CD8-positive, alpha-beta T cell (primary cell): ENCODE measurements at regions of chr17 and their contacts with region 1.

Region 1: DNA sequence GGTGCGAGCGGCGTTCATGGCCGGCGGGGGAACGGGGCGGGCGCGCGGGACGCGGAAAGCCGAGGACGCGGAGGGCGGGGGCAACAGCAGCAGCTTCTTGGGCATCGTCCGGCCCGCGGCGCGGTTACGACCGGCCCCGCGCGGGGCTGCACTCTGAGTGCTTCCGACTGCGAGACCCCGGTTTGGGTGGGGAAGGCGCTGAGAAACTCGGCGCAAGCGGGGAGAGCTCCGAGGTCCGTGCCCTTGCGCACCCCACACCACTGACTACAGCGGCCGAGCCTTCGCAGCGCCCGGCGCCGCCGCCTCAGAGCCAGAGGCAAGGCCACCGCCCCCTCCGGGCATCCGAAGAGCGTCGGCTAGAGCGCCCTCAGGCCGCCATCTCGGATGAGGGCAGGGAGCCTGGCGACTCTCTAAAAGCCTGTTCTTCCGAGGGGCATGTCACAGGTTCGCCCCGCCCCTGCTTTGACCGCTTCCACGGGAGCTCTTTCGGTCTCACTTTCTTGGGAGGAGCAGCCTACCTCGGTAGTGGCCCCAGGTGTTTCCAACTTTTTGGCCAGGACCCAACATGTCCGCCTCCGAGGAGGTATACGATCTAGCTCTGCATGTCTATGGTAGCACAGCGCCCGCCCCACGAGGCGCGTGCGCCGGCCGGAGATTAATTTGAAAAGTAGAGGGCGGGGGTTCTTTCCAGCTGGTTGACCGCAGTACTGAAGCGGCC is at the start of gene PRPSAP1:
- DNase-seq: peak; percentile 61 to 91 (median 83)
- ATAC-seq: peak; percentile 94
- H3K4me3 ChIP-seq: peak within 1 kb of the TSS; percentile 69 to 82
- H3K4me3 Mint-ChIP-seq: peak within 1 kb of the TSS; percentile 95
- H3K27ac ChIP-seq: peak within 1 kb of the TSS; percentile 53 to 95
- H3K27ac Mint-ChIP-seq: peak within 1 kb of the TSS; percentile 98
- H3K4me1 ChIP-seq: peaks cover 4% of the 10 kb centered on the region
- H3K4me1 Mint-ChIP-seq: peaks cover 24% of the 10 kb centered on the region
- H3K27me3 ChIP-seq: no peaks in the 10 kb centered on the region
- H3K27me3 Mint-ChIP-seq: no peaks in the 10 kb centered on the region
- CTCF ChIP-seq: peak; percentile 47
- total RNA-seq, gene PRPSAP1: 10.5 to 12.5 TPM

Region 2: DNA sequence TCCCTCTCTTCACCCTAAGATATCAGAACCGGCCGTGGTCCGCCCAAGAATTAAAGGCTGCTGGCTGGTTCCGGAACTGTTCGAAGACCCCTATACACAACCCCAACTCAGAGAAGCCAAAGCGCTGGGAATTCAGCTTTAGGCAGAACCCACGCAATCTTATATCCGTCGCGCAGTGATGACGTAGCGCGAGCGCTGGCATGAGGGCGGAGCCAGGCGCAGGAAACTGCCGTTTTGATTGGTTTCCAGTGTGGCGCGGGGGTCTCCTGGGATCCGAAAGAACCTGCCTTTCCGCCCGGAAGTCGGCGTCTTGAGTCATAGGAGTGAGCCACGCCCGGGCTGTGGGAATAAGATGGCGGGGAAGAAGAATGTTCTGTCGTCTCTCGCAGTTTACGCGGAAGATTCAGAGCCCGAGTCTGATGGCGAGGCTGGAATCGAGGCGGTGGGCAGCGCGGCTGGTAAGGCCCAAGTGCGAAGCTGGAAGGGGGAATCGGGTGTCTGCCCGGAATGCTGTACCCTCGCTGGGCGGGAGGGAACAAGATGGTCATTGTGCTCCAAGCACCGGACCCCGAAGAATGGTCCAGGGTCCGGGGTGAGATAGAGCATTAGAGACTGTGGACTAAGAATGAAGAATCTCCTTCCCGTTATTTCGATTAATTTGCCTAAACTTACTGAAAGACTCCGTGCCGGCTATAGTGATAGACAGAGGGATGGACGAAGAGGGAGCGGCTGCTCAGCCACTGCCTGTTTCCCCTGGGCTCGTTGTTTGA is 686.6 kb before region 1 on chr17 and contains the starts of genes RECQL5 and SAP30BP:
- CTCF ChIA-PET with region 1: no interaction called
- POLR2A ChIA-PET with region 1: no interaction called
- intact Hi-C with region 1: loop called in 1 of 2 experiments (anchors 2 kb)
- DNase-seq: peak; percentile 95 to 99 (median 98)
- ATAC-seq: peak; percentile 100
- H3K4me3 ChIP-seq: peak within 1 kb of the TSS; percentile 78 to 85
- H3K4me3 Mint-ChIP-seq: peak within 1 kb of the TSS; percentile 58
- H3K27ac ChIP-seq: peak within 1 kb of the TSS; percentile 88 to 96
- H3K27ac Mint-ChIP-seq: no peak within 1 kb of the TSS
- H3K4me1 ChIP-seq: peaks cover 18% of the 10 kb centered on the region
- H3K4me1 Mint-ChIP-seq: peaks cover 33% of the 10 kb centered on the region
- H3K27me3 ChIP-seq: no peaks in the 10 kb centered on the region
- H3K27me3 Mint-ChIP-seq: no peaks in the 10 kb centered on the region
- CTCF ChIP-seq: no peak
- total RNA-seq, gene RECQL5: 11.2 to 13.2 TPM
- total RNA-seq, gene SAP30BP: 303 to 305 TPM

Region 3: GRCh38 chr17:76072148-76072858 is 281.5 kb before region 1 on chr17 and contains the start of gene SRP68:
- CTCF ChIA-PET with region 1: no interaction called
- POLR2A ChIA-PET with region 1: no interaction called
- intact Hi-C with region 1: loop called in 1 of 2 experiments (anchors 1 kb)
- DNase-seq: peak; percentile 63 to 91 (median 83)
- ATAC-seq: peak; percentile 82
- H3K4me3 ChIP-seq: peak within 1 kb of the TSS; percentile 86 to 98
- H3K4me3 Mint-ChIP-seq: peak within 1 kb of the TSS; percentile 96
- H3K27ac ChIP-seq: peak within 1 kb of the TSS; percentile 77 to 81
- H3K27ac Mint-ChIP-seq: peak within 1 kb of the TSS; percentile 95
- H3K4me1 ChIP-seq: peaks cover 44% of the 10 kb centered on the region
- H3K4me1 Mint-ChIP-seq: peaks cover 53% of the 10 kb centered on the region
- H3K27me3 ChIP-seq: peaks cover 18 to 28% of the 10 kb centered on the region in 2 experiments
- H3K27me3 Mint-ChIP-seq: peaks cover 19% of the 10 kb centered on the region
- CTCF ChIP-seq: no peak
- total RNA-seq, gene SRP68: 93.6 to 99.9 TPM

Region 4: DNA sequence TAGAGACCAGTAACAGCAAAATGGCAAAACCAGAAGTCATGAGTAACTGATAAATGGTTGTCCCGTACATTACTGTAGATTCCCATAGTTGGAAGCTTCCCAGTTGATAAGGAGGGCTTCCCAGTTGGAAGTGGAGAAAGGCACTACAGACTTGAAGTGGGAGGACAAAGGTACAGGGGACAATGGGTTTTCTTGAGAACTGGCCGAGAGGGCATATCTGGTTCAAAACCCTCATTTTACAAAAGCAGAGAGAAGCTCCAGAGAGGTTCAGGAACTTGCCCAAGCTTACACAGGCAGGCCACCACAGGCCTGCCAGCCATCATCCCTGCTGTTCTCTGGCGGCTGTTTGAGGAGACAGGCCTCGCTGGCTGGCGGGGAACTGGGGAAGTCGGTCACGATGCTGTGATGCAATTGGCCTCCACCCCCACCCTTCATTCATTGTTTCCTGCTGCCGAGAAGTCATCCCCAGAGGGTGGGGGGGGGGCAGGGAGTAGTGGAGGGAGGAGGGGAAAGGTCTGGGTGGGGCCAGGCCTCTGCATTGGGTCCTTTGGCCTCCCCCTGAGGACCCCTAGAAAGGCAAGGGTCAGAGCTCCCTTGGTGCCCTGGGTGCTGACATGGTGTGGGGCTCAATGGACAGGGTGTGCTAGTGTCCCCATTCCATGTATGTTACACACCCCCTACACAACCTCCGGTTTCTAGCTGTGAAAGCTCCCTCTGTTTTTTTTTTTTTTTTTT is 85.6 kb before region 1 on chr17:
- CTCF ChIA-PET with region 1: no interaction called
- POLR2A ChIA-PET with region 1: no interaction called
- intact Hi-C with region 1: no loop called
- DNase-seq: peak in 8 of 9 experiments; percentile 43 to 89 (median 72)
- ATAC-seq: peak; percentile 11
- H3K4me3 ChIP-seq: peak overlapping the region; percentile 40 to 76
- H3K4me3 Mint-ChIP-seq: peak overlapping the region; percentile 90
- H3K27ac ChIP-seq: peak overlapping the region; percentile 74 to 79
- H3K27ac Mint-ChIP-seq: peak overlapping the region; percentile 96
- H3K4me1 ChIP-seq: peaks cover 78% of the 10 kb centered on the region
- H3K4me1 Mint-ChIP-seq: peaks cover 61% of the 10 kb centered on the region
- H3K27me3 ChIP-seq: no peaks in the 10 kb centered on the region
- H3K27me3 Mint-ChIP-seq: no peaks in the 10 kb centered on the region
- CTCF ChIP-seq: no peak

Region 5: DNA sequence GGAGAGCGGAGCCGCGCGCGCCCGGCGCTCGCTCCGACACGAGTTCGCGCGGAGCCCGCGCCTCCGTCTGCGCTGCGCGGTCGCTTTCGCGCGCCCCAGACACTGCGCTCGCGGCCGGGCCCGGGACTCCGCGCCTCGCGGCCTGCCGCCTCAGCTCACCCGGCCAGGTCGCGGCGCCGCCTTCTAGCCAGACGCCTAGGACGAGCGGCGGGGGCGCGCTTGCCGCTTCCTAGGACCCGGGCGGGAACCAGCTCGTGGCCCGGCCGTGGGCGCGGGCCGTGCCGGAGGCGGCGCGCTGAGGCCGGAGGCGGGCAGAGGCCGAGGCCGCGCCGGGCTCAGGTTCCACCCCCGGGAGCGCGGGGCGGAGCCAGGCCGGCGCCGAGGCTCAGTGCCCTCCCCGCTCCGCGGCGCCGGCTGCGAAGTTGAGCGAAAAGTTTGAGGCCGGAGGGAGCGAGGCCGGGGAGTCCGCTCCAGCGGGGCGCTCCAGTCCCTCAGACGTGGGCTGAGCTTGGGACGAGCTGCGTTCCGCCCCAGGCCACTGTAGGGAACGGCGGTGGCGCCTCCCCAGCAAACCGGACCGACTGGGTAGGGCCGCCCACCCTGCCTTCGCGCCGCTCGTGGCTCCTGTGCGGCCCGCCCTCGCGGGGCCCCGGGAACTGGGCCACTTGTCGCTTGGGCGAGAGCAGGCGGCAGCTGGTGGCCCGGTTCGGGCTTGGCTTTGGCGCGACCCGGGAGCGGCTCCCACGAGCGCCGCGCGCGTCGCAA is 30.6 kb after region 1 on chr17 and contains the start of gene SPHK1:
- CTCF ChIA-PET with region 1: interaction called, 18 read pairs
- POLR2A ChIA-PET with region 1: interaction called, 51 read pairs
- intact Hi-C with region 1: loop called (anchors 1 kb)
- DNase-seq: peak in 8 of 9 experiments; percentile 25 to 81 (median 57)
- ATAC-seq: peak; percentile 39
- H3K4me3 ChIP-seq: peak within 1 kb of the TSS; percentile 49 to 69
- H3K4me3 Mint-ChIP-seq: peak within 1 kb of the TSS; percentile 88
- H3K27ac ChIP-seq: peak within 1 kb of the TSS; percentile 8 to 42
- H3K27ac Mint-ChIP-seq: peak within 1 kb of the TSS; percentile 64
- H3K4me1 ChIP-seq: peaks cover 32% of the 10 kb centered on the region
- H3K4me1 Mint-ChIP-seq: peaks cover 13% of the 10 kb centered on the region
- H3K27me3 ChIP-seq: no peaks in the 10 kb centered on the region
- H3K27me3 Mint-ChIP-seq: peaks cover 2% of the 10 kb centered on the region
- CTCF ChIP-seq: no peak
- total RNA-seq, gene SPHK1: 2.0 to 2.6 TPM

Region 6: GRCh38 chr17:76452660-76453430 is 99.1 kb after region 1 on chr17 and contains the start of gene UBE2O:
- CTCF ChIA-PET with region 1: no interaction called
- POLR2A ChIA-PET with region 1: no interaction called
- intact Hi-C with region 1: loop called in 1 of 2 experiments (anchors 5 kb)
- DNase-seq: peak; percentile 84 to 96 (median 94)
- ATAC-seq: peak; percentile 92
- H3K4me3 ChIP-seq: peak within 1 kb of the TSS; percentile 49 to 78
- H3K4me3 Mint-ChIP-seq: peak within 1 kb of the TSS; percentile 85
- H3K27ac ChIP-seq: peak within 1 kb of the TSS; percentile 50 to 64
- H3K27ac Mint-ChIP-seq: peak within 1 kb of the TSS; percentile 78
- H3K4me1 ChIP-seq: peaks cover 22% of the 10 kb centered on the region
- H3K4me1 Mint-ChIP-seq: peaks cover 39% of the 10 kb centered on the region
- H3K27me3 ChIP-seq: no peaks in the 10 kb centered on the region
- H3K27me3 Mint-ChIP-seq: no peaks in the 10 kb centered on the region
- CTCF ChIP-seq: peak; percentile 39
- total RNA-seq, gene UBE2O: 29.8 to 32.7 TPM

Region 7: GRCh38 chr17:76671123-76671911 is 317.6 kb after region 1 on chr17:
- CTCF ChIA-PET with region 1: no interaction called
- POLR2A ChIA-PET with region 1: no interaction called
- intact Hi-C with region 1: loop called in 1 of 2 experiments (anchors 5 kb)
- DNase-seq: peak; percentile 96 to 100 (median 99)
- ATAC-seq: peak; percentile 97
- H3K4me3 ChIP-seq: peak overlapping the region; percentile 76 to 79
- H3K4me3 Mint-ChIP-seq: peak overlapping the region; percentile 90
- H3K27ac ChIP-seq: peak overlapping the region; percentile 71 to 90
- H3K27ac Mint-ChIP-seq: peak overlapping the region; percentile 96
- H3K4me1 ChIP-seq: peaks cover 39% of the 10 kb centered on the region
- H3K4me1 Mint-ChIP-seq: peaks cover 49% of the 10 kb centered on the region
- H3K27me3 ChIP-seq: no peaks in the 10 kb centered on the region
- H3K27me3 Mint-ChIP-seq: no peaks in the 10 kb centered on the region
- CTCF ChIP-seq: no peak

Region 8: GRCh38 chr17:77027271-77027670 is 673.5 kb after region 1 on chr17:
- CTCF ChIA-PET with region 1: no interaction called
- POLR2A ChIA-PET with region 1: no interaction called
- intact Hi-C with region 1: no loop called
- DNase-seq: no peak
- ATAC-seq: no peak
- H3K4me3 ChIP-seq: no peak overlapping the region
- H3K4me3 Mint-ChIP-seq: no peak overlapping the region
- H3K27ac ChIP-seq: no peak overlapping the region
- H3K27ac Mint-ChIP-seq: no peak overlapping the region
- H3K4me1 ChIP-seq: no peaks in the 10 kb centered on the region
- H3K4me1 Mint-ChIP-seq: no peaks in the 10 kb centered on the region
- H3K27me3 ChIP-seq: no peaks in the 10 kb centered on the region
- H3K27me3 Mint-ChIP-seq: no peaks in the 10 kb centered on the region
- CTCF ChIP-seq: no peak

Region 9: GRCh38 chr17:77088455-77089123 is 734.8 kb after region 1 on chr17:
- CTCF ChIA-PET with region 1: no interaction called
- POLR2A ChIA-PET with region 1: no interaction called
- intact Hi-C with region 1: loop called in 1 of 2 experiments (anchors 2 kb)
- DNase-seq: peak; percentile 73 to 96 (median 86)
- ATAC-seq: peak; percentile 82
- H3K4me3 ChIP-seq: peak overlapping the region; percentile 55 to 96
- H3K4me3 Mint-ChIP-seq: peak overlapping the region; percentile 98
- H3K27ac ChIP-seq: peak overlapping the region; percentile 81 to 93
- H3K27ac Mint-ChIP-seq: peak overlapping the region; percentile 99
- H3K4me1 ChIP-seq: peaks cover 37% of the 10 kb centered on the region
- H3K4me1 Mint-ChIP-seq: peaks cover 48% of the 10 kb centered on the region
- H3K27me3 ChIP-seq: no peaks in the 10 kb centered on the region
- H3K27me3 Mint-ChIP-seq: peaks cover 2% of the 10 kb centered on the region
- CTCF ChIP-seq: peak; percentile 64